ENCODE measurements at regions of chr1 and their contacts with region 1.

Region 1: GRCh38 chr1:176206961-176207902 is at the start of gene COP1:
- DNase-seq: peak; percentile 98 to 99
- ATAC-seq: peak; percentile 97
- H3K4me3 ChIP-seq: peak within 1 kb of the TSS; percentile 65 to 85
- H3K27ac ChIP-seq: peak within 1 kb of the TSS; percentile 79 to 86
- H3K4me1 ChIP-seq: peaks cover 0 to 3% of the 10 kb centered on the region in 2 donors
- H3K27me3 ChIP-seq: no peaks in the 10 kb centered on the region
- total RNA-seq, gene COP1: 39.2 to 54.2 TPM

Region 2: DNA sequence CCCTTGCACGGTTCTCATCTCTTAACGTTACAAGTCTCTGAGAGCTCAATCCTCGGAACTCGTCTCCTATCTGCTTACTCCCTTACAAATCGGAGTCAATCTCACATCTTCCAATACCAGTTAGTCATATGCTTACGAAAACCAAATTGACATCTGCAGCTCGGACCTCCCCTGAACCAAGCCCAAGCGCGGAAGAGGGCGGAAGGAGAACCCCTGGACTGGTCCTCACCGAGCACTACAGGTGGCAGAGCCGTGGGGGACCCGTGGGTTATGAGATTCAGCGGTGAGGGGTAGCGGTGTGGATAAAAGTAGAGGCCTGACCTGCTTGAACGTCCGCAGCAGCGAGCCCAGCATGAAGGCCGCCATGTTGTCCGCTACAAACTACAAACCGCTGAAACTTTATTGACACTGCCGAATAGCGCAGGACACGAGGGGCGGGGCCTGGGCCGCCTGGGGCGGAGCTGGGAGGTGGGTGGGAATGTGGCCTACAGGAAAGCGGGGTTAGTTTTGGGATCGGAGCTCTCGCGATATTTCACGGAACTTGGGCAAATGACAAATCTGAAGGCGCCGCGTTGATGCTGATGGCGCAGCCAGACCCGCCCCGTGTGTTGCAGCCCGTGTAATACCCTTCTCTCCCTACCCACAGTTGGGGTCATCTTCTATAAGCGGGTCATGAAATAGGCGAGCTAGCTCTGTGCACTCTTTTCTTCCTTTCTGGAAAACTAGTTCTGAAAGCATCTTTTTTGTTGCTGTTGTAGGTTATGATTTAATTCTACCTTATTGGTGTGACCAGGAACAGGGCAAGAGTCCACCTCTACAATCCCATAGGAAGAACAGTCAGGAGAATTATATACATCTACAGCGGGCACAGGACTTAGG is 1184.0 kb before region 1 on chr1 and contains the start of gene MRPS14:
- intact Hi-C with region 1: loop called in 1 of 2 experiments (anchors 5 kb)
- DNase-seq: peak; percentile 98 to 99
- ATAC-seq: peak; percentile 100
- H3K4me3 ChIP-seq: peak within 1 kb of the TSS; percentile 84 to 90
- H3K27ac ChIP-seq: peak within 1 kb of the TSS; percentile 76 to 80
- H3K4me1 ChIP-seq: no peaks in the 10 kb centered on the region
- H3K27me3 ChIP-seq: no peaks in the 10 kb centered on the region
- total RNA-seq, gene MRPS14: 22.0 to 28.3 TPM

Region 3: GRCh38 chr1:175192630-175193526 is 1014.4 kb before region 1 on chr1 and contains the start of gene KIAA0040:
- intact Hi-C with region 1: loop called in 1 of 2 experiments (anchors 5 kb)
- DNase-seq: peak; percentile 81 to 89
- ATAC-seq: peak; percentile 88
- H3K4me3 ChIP-seq: peak within 1 kb of the TSS; percentile 70 to 87
- H3K27ac ChIP-seq: peak within 1 kb of the TSS; percentile 58 to 69
- H3K4me1 ChIP-seq: no peaks in the 10 kb centered on the region
- H3K27me3 ChIP-seq: no peaks in the 10 kb centered on the region
- total RNA-seq, gene KIAA0040: 23.0 to 25.8 TPM